ENCODE measurements at regions of chr15 and their contacts with region 1.

Region 1: GRCh38 chr15:33864360-33865075 is 103.8 kb upstream of the CHRM5 start:
- DNase-seq: no peak
- H3K4me3 ChIP-seq: no peak overlapping the region
- H3K27ac ChIP-seq: no peak overlapping the region
- H3K27me3 ChIP-seq: no peaks in the 10 kb centered on the region
- CTCF ChIP-seq: no peak

Region 2: DNA sequence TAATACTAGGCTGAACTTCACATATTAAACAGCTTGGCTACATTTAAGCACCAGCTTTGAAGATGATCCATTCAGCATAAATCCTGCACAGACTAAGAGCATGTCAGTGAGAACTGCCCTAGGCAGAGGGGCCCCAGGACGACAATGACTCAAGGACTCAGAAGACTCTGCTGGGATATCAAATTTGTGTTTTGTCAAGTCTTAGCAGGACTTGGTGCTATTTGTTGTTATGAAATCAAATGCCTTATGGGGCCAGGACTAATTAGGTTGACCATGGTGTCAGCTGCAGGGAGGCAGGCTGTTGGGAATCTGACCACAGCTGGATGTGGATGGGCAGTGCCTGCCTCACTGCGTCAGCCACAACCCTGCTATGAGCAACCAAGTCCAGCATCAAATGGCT is 461.9 kb before region 1 on chr15:
- CTCF ChIA-PET with region 1: no interaction called
- POLR2A ChIA-PET with region 1: no interaction called
- DNase-seq: no peak
- H3K4me3 ChIP-seq: no peak overlapping the region
- H3K27ac ChIP-seq: no peak overlapping the region
- H3K27me3 ChIP-seq: no peaks in the 10 kb centered on the region
- CTCF ChIP-seq: no peak

Region 3: GRCh38 chr15:33834892-33835743 is 29.4 kb before region 1 on chr15:
- CTCF ChIA-PET with region 1: no interaction called
- POLR2A ChIA-PET with region 1: interaction called, 11 read pairs
- DNase-seq: no peak
- H3K4me3 ChIP-seq: no peak overlapping the region
- H3K27ac ChIP-seq: no peak overlapping the region
- H3K27me3 ChIP-seq: no peaks in the 10 kb centered on the region
- CTCF ChIP-seq: no peak